ENCODE measurements at regions of chr12 and their contacts with region 1.

Region 1: GRCh38 chr12:53379389-53380103 is 430 bp upstream of the SP1 start:
- DNase-seq: peak; percentile 86 to 100
- H3K4me3 ChIP-seq: peak overlapping the region; percentile 50 to 72 (median 56)
- H3K27ac ChIP-seq: peak overlapping the region; percentile 96
- H3K4me1 ChIP-seq: peaks cover 6 to 26% (median 14%) of the 10 kb centered on the region in 4 experiments
- H3K27me3 ChIP-seq: no peaks in the 10 kb centered on the region
- CTCF ChIP-seq: no peak
- EP300 ChIP-seq: no peak
- POLR2A ChIP-seq: peak; percentile 93 to 98
- RAD21 ChIP-seq: no peak

Region 2: GRCh38 chr12:53230108-53230850 is 149.3 kb before region 1 on chr12:
- CTCF ChIA-PET with region 1: no interaction called
- POLR2A ChIA-PET with region 1: no interaction called
- DNase-seq: no peak
- H3K4me3 ChIP-seq: peak overlapping the region in 1 of 4 experiments; percentile 74; a peak in 1 of 8 replicates
- H3K27ac ChIP-seq: no peak overlapping the region
- H3K4me1 ChIP-seq: peaks cover 34 to 61% (median 43%) of the 10 kb centered on the region in 4 experiments
- H3K27me3 ChIP-seq: no peaks in the 10 kb centered on the region
- CTCF ChIP-seq: no peak
- EP300 ChIP-seq: no peak
- POLR2A ChIP-seq: no peak
- RAD21 ChIP-seq: no peak

Region 3: DNA sequence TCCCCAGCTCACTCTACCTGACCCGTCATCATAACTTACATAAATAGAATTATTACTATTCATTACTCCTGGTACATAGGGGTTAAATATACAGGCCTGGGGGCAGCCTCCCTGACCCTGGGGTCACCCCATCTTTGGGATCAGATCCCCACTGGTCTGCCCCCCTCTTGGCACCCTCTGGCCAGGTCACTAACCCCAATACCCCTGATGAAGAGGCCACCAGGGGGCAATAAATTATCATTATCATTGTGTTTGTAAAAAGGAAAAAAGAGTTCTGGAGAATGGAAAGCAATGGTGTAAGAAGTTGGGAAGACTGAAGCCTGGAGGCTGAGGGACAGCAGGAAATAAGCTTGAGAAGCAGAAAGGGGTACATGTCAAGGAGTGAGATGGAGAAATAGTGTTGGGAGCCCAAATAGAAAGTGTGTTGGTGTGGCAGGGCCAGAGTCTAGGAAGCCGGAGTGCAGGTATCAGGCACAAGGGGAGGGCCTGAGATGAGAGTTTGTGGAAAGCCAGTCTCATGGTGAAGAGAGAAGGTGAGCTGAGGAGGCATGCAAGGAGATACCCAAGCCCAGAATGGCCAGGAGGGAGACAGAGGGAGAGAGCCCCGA is 52.0 kb before region 1 on chr12:
- CTCF ChIA-PET with region 1: interaction called, 25 read pairs
- POLR2A ChIA-PET with region 1: interaction called, 6 read pairs
- DNase-seq: no peak
- H3K4me3 ChIP-seq: no peak overlapping the region
- H3K27ac ChIP-seq: no peak overlapping the region
- H3K4me1 ChIP-seq: peaks cover 0 to 17% (median 9%) of the 10 kb centered on the region in 4 experiments; a peak in 6 of 7 replicates
- H3K27me3 ChIP-seq: peaks cover 13 to 56% (median 48%) of the 10 kb centered on the region in 4 experiments
- CTCF ChIP-seq: no peak
- EP300 ChIP-seq: no peak
- POLR2A ChIP-seq: no peak
- RAD21 ChIP-seq: peak in 1 of 2 experiments; percentile 15; a peak in 1 of 4 replicates

Region 4: GRCh38 chr12:53344824-53345485 is 34.6 kb before region 1 on chr12:
- CTCF ChIA-PET with region 1: interaction called, 11 read pairs
- POLR2A ChIA-PET with region 1: interaction called, 19 read pairs
- DNase-seq: peak in 1 of 2 experiments; percentile 78
- H3K4me3 ChIP-seq: peak overlapping the region; percentile 37 to 80 (median 72)
- H3K27ac ChIP-seq: no peak overlapping the region
- H3K4me1 ChIP-seq: peaks cover 0 to 15% (median 8%) of the 10 kb centered on the region in 4 experiments; a peak in 5 of 7 replicates
- H3K27me3 ChIP-seq: peaks cover 3 to 13% (median 8%) of the 10 kb centered on the region in 4 experiments; a peak in 4 of 7 replicates
- CTCF ChIP-seq: peak in 2 of 3 experiments; percentile 12 to 24; a peak in 2 of 4 replicates
- EP300 ChIP-seq: no peak
- POLR2A ChIP-seq: 0 out of 3 replicates have a peak, but pooled peaks of 1 of the 2 experiments have one; percentile 32
- RAD21 ChIP-seq: peak in 1 of 2 experiments; percentile 35; a peak in 2 of 4 replicates

Region 5: DNA sequence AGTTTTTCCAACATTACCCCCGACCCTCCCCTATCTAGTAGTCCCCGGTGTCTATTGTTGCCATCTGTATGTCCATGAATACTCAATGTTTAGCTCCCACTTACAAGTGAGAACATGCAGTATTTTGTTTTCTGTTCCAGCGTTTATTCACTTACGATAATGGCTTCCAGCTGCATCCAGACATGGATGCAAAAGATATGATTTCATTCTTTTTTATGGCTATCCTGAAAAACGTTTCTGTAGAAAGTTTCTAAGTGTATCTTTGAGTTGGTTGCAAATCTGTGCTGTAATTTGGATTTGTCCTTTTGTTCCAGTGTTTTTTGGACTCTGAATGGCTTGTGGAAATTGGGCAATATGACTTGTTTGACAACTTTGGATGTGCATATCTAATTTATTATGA is 12.2 kb after region 1 on chr12:
- CTCF ChIA-PET with region 1: interaction called, 5 read pairs
- POLR2A ChIA-PET with region 1: interaction called, 22 read pairs
- DNase-seq: no peak
- H3K4me3 ChIP-seq: no peak overlapping the region
- H3K27ac ChIP-seq: no peak overlapping the region
- H3K4me1 ChIP-seq: no peaks in the 10 kb centered on the region
- H3K27me3 ChIP-seq: no peaks in the 10 kb centered on the region
- CTCF ChIP-seq: no peak
- EP300 ChIP-seq: no peak
- POLR2A ChIP-seq: no peak
- RAD21 ChIP-seq: no peak

Region 6: GRCh38 chr12:53414756-53415417 is 35.3 kb after region 1 on chr12:
- CTCF ChIA-PET with region 1: interaction called, 17 read pairs
- POLR2A ChIA-PET with region 1: interaction called, 10 read pairs
- DNase-seq: no peak
- H3K4me3 ChIP-seq: no peak overlapping the region
- H3K27ac ChIP-seq: no peak overlapping the region
- H3K4me1 ChIP-seq: no peaks in the 10 kb centered on the region; a peak in 1 of 7 replicates
- H3K27me3 ChIP-seq: no peaks in the 10 kb centered on the region
- CTCF ChIP-seq: no peak
- EP300 ChIP-seq: no peak
- POLR2A ChIP-seq: no peak
- RAD21 ChIP-seq: no peak

Region 7: DNA sequence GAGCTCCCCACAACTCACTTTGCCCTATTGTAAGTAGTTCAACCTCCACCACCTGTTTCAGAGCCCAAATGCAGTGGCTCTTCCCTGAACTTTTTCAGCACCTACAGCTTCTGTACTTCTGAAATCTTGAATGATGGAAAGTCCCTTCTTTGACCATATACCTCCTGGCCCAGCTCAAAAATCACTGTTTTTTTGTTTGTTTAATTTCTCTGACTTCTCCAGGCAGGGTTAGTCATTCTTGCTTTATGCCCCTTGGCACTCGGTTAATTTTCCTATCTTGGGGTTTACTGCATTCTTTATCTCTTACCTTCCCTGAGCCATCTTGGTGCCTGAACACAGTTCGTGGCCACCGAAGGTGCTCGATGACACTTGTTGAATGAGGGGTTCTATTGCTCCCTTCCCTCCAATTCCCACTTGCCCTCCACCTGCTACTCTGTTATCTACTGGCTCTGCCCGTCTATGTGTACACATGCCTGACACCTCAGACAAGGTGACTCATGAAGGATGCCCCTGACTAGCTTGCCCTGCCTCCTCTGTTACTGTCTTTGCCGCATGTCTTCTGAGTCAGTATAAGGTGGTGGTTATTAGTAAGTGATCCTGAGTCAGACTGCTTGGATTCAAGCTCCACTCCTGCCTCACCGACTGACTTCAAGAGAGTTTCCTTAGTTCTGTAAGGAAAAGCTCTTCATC is 48.5 kb after region 1 on chr12:
- CTCF ChIA-PET with region 1: interaction called, 37 read pairs
- POLR2A ChIA-PET with region 1: interaction called, 4 read pairs
- DNase-seq: no peak
- H3K4me3 ChIP-seq: no peak overlapping the region
- H3K27ac ChIP-seq: no peak overlapping the region
- H3K4me1 ChIP-seq: no peaks in the 10 kb centered on the region
- H3K27me3 ChIP-seq: no peaks in the 10 kb centered on the region
- CTCF ChIP-seq: no peak
- EP300 ChIP-seq: no peak
- POLR2A ChIP-seq: no peak
- RAD21 ChIP-seq: no peak

Region 8: GRCh38 chr12:53451661-53452158 is 72.2 kb after region 1 on chr12 and contains the start of gene PCBP2:
- CTCF ChIA-PET with region 1: interaction called, 3 read pairs
- POLR2A ChIA-PET with region 1: interaction called, 10 read pairs
- DNase-seq: peak; percentile 92 to 98
- H3K4me3 ChIP-seq: peak within 1 kb of the TSS; percentile 89 to 99 (median 94)
- H3K27ac ChIP-seq: peak within 1 kb of the TSS; percentile 96
- H3K4me1 ChIP-seq: peaks cover 0 to 8% (median 1%) of the 10 kb centered on the region in 4 experiments; a peak in 3 of 7 replicates
- H3K27me3 ChIP-seq: no peaks in the 10 kb centered on the region
- CTCF ChIP-seq: peak; percentile 72 to 94 (median 85)
- EP300 ChIP-seq: peak in 1 of 2 experiments; percentile 86; a peak in 1 of 3 replicates
- POLR2A ChIP-seq: peak; percentile 91
- RAD21 ChIP-seq: no peak; a peak in 1 of 4 replicates
- total RNA-seq, gene PCBP2: 1,114 and 1,123 TPM in 2 replicates

Region 9: GRCh38 chr12:53575502-53576253 is 196.1 kb after region 1 on chr12:
- CTCF ChIA-PET with region 1: no interaction called
- POLR2A ChIA-PET with region 1: no interaction called
- DNase-seq: no peak
- H3K4me3 ChIP-seq: no peak overlapping the region
- H3K27ac ChIP-seq: no peak overlapping the region
- H3K4me1 ChIP-seq: no peaks in the 10 kb centered on the region
- H3K27me3 ChIP-seq: no peaks in the 10 kb centered on the region
- CTCF ChIP-seq: no peak
- EP300 ChIP-seq: no peak
- POLR2A ChIP-seq: no peak
- RAD21 ChIP-seq: no peak

Measured in H1 (cell line).